ENCODE measurements at regions of chr16 and their contacts with region 1.

Region 1: DNA sequence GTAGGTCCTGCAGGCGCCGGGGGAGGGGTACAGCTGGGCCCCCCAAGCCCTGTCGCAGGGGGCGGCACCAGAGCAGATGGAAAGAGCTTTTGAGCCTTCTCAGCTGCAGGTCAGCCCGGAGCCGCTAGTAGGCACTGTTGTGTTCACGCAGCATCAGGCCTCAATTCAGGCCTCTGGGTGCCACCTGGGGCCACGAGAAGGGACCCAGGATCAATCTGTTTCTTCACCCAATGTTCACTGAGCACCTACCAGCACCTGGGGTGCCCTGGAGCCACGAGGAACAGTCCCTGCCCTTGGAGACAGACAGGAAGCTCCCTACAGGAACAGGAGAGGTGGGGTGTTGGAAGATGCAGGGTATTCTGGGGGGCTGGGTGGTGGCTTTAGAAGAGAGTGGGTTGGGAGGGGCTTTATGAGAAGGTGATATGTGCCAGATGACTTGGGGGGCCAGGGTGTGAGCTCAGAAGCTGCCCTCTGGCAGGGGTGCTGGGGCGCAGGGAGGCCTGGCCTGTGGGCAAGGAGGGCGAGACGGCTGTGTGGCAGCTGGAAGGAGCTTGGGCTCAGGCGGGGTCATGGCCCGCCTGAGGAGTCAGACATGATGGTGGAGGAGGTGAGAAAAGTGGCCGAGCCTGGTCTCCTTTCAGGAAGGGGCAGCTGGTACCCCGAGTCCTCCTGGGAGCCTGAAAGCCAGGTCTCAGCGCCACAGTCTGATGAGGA is 121.9 kb upstream of the GSE1 start:
- DNase-seq: peak; percentile 33 to 55 (median 34)
- H3K4me3 ChIP-seq: no peak overlapping the region
- H3K27ac ChIP-seq: no peak overlapping the region
- H3K4me1 ChIP-seq: peaks cover 0 to 37% (median 16%) of the 10 kb centered on the region in 4 experiments
- H3K27me3 ChIP-seq: no peaks in the 10 kb centered on the region

Region 2: GRCh38 chr16:85296859-85297660 is 194.2 kb before region 1 on chr16:
- CTCF ChIA-PET with region 1: no interaction called
- POLR2A ChIA-PET with region 1: no interaction called
- DNase-seq: peak; percentile 78 to 86 (median 85)
- H3K4me3 ChIP-seq: no peak overlapping the region
- H3K27ac ChIP-seq: no peak overlapping the region
- H3K4me1 ChIP-seq: peaks cover 0 to 2% (median 0%) of the 10 kb centered on the region in 4 experiments
- H3K27me3 ChIP-seq: no peaks in the 10 kb centered on the region

Region 3: DNA sequence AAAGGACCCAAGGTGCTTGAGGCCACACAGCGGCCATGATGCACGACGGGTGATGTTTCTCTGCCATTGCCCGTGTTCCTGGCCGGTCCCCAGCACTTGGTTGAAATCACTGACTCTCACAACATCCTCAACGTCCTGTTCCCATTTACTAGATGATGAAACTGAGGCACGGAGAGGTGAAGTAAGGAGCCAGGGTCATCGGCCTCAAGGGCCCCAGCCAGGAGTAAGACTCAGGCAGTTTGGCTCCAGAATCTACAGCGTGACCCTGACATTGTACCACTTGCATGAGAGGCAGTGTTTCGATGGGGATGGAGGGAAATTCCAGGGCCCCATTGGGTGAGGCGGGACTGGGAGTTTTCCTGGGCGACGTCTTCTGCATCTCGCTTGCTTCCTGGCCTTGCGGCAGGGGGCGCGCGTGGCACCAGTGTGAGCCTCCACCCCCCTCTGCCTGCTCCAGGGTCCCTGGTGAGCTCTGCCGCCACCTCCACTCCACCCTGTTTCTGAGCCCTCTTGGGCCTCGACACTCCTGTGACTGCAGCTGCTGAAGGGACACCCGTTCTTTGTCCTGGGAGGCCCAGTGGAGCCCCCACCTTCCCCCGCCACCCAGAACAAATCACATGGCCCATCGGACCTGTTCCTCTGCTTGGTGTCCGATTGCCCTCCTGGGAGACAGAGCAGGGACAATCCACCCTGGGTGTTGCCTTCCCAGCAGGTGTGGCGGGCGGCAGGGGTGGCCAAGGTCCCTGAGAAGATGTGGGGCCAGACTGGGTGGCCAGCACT is 11.1 kb before region 1 on chr16:
- CTCF ChIA-PET with region 1: interaction called, 14 read pairs
- POLR2A ChIA-PET with region 1: no interaction called
- DNase-seq: peak in 2 of 3 donors; percentile 33 to 48
- H3K4me3 ChIP-seq: no peak overlapping the region
- H3K27ac ChIP-seq: no peak overlapping the region
- H3K4me1 ChIP-seq: peaks cover 0 to 23% (median 11%) of the 10 kb centered on the region in 4 experiments
- H3K27me3 ChIP-seq: no peaks in the 10 kb centered on the region

Region 4: DNA sequence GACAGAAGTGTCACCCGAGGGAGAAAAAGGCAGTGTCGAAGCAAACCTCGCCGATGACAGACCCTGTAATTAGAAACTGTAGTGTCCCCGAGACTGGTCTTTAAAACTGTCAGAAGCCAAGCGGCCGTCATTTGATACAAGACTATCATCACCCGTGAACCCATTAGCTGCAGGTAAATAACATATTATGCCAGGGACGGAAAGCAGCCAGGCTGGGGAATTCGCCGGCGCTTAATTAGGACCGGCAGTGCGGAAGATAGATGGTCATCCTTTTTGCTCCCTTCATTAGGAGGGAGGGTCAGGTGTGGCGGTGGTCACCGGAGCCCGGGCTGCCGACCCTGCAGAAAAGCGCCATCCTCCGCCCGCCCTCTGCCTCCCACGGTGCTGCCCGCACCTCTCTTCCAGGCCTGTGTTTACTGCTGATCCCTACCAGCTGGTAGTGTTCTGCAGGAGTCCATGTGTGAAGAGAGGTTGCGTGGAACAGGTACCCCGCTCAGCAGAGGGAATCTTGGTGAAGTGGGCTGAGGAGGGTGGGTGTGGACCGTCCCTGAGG is 12.5 kb after region 1 on chr16:
- CTCF ChIA-PET with region 1: interaction called, 11 read pairs
- POLR2A ChIA-PET with region 1: no interaction called
- DNase-seq: no peak
- H3K4me3 ChIP-seq: no peak overlapping the region
- H3K27ac ChIP-seq: no peak overlapping the region
- H3K4me1 ChIP-seq: peaks cover 0 to 8% (median 4%) of the 10 kb centered on the region in 4 experiments
- H3K27me3 ChIP-seq: no peaks in the 10 kb centered on the region

Region 5: DNA sequence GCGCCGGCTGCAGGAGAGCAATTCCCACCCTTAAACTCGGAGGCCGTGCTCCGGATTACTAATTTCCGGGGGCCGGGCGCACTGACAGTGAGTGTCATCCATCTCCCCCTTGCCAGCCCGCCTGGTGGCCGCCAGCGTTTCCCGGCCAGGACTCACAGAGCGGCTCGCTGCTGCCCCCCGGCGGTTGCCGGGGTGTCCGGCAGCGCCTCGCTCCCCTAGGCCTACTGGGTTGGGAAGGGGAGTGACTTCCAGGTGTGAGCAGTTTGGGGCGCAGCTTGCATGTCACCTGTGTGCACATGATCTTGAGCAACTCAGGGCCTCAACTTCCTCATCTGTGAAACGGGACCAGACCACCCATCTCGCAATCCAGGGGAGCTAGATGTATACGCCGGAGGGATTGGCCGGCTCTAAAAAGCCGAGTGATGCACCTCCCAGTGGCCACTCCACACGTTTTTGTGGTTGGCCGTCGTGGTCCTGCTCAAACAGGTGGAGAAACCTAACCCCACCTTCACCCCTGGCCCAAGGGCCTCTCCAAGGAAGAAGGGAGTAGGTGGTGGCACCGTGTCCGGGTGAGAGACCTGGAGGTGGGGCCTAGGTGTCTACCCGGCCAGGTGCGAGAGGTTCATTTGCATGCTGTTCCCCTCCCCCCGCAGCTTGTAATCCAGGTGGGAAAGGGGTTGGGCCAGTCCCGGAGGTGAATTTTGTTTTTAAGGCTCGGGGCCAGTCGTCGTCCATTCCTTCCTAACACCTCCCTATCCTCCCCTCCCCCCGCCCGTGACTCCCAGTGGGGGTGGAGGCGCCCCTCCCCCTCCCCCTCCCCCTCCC is 119.5 kb after region 1 on chr16:
- CTCF ChIA-PET with region 1: interaction called, 12 read pairs
- POLR2A ChIA-PET with region 1: no interaction called
- DNase-seq: peak; percentile 84 to 88 (median 86)
- H3K4me3 ChIP-seq: peak overlapping the region in 5 of 7 experiments; percentile 36 to 85 (median 65)
- H3K27ac ChIP-seq: peak overlapping the region; percentile 23 to 71
- H3K4me1 ChIP-seq: peaks cover 3 to 73% (median 60%) of the 10 kb centered on the region in 4 experiments
- H3K27me3 ChIP-seq: no peaks in the 10 kb centered on the region

Region 6: DNA sequence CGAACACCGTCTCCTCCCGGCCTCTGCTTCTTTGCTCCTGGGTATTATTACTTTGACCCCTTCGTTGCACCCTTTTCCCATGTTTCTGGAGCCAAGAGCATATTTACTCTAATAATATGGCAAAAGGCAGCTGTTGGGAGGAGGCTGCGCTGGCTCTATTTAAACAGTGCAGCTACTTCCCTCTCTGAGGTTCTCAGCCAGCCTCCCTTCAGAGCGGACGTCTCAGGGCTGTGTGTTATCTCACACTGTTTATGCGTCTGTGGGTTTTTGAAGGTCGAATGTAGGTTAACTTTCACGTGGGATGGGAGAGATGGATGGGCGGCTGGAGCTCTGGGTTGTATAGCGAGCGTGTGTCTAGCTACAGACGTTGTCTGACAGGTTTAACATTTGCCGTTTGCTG is 353.6 kb after region 1 on chr16:
- CTCF ChIA-PET with region 1: no interaction called
- POLR2A ChIA-PET with region 1: no interaction called
- DNase-seq: no peak
- H3K4me3 ChIP-seq: no peak overlapping the region
- H3K27ac ChIP-seq: no peak overlapping the region
- H3K4me1 ChIP-seq: peaks cover 0 to 13% (median 2%) of the 10 kb centered on the region in 4 experiments
- H3K27me3 ChIP-seq: peaks cover 0 to 46% (median 5%) of the 10 kb centered on the region in 5 experiments